MCF 10A (cell line): ENCODE measurements at regions of chr3 and their contacts with region 1.

Region 1: DNA sequence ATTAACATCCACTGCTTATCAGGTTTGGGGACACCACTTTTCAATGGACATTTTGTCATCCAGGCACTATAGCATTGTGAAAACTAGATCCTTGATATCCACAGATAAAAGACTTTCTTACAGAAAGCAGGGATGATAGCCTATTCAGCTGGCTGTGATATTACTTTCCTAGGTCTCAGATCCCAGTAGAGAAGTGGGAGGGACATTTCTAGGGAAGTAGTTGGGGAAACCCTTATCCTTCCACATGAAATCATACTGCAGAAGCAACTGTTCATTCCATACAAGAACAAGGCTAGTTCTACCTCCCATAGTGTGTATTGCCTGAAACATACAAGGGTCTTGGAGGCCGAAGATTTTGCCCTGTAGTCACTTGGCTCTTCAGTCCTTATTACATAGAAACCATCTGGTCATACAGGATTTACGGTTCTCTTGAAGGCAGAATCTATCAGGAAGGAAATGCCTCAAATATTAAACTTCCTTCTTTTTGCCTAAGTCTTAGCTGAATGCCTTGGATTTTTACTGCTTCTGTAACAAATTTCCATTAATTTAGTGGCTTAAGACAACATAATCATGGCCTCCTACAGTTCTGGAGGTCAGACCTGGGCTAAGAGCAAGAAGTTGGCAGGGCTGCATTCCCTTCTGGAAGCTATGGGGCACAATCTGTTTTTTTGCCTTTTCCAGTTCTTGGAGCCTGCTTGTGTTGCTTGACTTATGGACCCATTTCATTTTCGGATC is 119.4 kb downstream of the ECT2 start:
- DNase-seq: no peak
- H3K4me3 Mint-ChIP-seq: no peak overlapping the region
- H3K27ac Mint-ChIP-seq: no peak overlapping the region
- H3K4me1 Mint-ChIP-seq: peaks cover 14% of the 10 kb centered on the region
- H3K27me3 Mint-ChIP-seq: peaks cover 12% of the 10 kb centered on the region
- CTCF ChIP-seq: no peak

Region 2: GRCh38 chr3:172846103-172846561 is 23.8 kb before region 1 on chr3:
- CTCF ChIA-PET with region 1: no interaction called
- POLR2A ChIA-PET with region 1: interaction called, 3 read pairs
- intact Hi-C with region 1: loop called (anchors 2 kb)
- DNase-seq: no peak
- H3K4me3 Mint-ChIP-seq: no peak overlapping the region
- H3K27ac Mint-ChIP-seq: peak overlapping the region; percentile 29
- H3K4me1 Mint-ChIP-seq: no peaks in the 10 kb centered on the region
- H3K27me3 Mint-ChIP-seq: peaks cover 42% of the 10 kb centered on the region
- CTCF ChIP-seq: no peak

Region 3: DNA sequence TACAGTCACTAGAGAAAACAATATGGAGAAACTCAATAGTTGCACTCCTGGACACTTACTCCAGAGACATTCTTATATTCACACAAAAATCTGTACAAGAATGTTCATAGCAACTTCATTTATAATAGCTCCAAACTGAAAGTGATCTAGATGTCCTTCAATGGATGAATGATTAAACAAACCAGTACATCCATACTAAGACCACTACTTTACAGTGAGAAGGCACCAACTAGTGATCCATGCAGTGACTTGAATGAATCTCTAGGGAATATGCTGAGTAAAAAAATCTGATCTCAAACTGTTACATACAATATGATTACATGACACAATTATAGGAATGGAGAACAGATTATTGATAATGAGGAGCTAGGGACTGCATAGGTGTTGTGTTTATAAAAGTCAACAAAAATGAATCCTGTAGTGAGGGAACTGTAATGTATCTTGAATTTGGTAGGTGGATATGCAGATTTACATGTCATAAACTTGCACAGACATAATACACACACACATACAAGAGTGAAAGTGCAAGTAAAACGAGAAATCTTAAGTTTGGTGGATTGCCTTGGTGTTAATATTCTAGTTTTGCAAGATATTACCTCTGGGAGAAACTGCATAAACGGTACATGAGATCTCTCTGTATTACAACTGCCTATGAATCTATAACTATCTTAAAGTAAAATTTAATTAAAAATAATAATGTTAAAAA is 185.4 kb after region 1 on chr3:
- CTCF ChIA-PET with region 1: no interaction called
- POLR2A ChIA-PET with region 1: no interaction called
- intact Hi-C with region 1: no loop called
- DNase-seq: no peak
- H3K4me3 Mint-ChIP-seq: no peak overlapping the region
- H3K27ac Mint-ChIP-seq: no peak overlapping the region
- H3K4me1 Mint-ChIP-seq: no peaks in the 10 kb centered on the region
- H3K27me3 Mint-ChIP-seq: peaks cover 84% of the 10 kb centered on the region
- CTCF ChIP-seq: no peak